ENCODE measurements at regions of chr12 and their contacts with region 1.

Region 1: DNA sequence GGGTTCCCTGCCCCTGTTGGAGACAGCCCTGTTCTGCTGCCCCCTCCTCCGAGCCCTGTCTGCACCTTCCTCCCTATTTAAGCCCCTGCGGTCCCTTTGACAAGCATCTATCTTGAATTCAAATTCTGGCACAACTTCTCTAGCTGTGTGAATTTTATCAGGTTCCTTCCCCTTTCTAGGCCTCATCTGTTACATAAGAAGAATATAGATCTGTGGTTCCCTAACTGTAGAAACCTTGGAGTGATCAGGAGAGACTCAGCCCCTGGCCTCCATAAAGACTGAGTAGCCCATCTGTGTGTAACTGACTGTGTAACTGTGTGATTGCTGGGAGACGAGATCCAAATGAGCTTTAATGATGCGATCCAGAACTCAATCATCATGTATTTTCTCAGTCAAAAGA is 13.0 kb upstream of the RACGAP1 start:
- DNase-seq: no peak
- ATAC-seq: no peak
- H3K4me3 Mint-ChIP-seq: no peak overlapping the region
- H3K27ac Mint-ChIP-seq: no peak overlapping the region
- H3K4me1 Mint-ChIP-seq: peaks cover 4% of the 10 kb centered on the region
- H3K27me3 Mint-ChIP-seq: peaks cover 10% of the 10 kb centered on the region

Region 2: GRCh38 chr12:49983892-49984291 is 54.4 kb before region 1 on chr12:
- CTCF ChIA-PET with region 1: interaction called, 10 read pairs
- POLR2A ChIA-PET with region 1: no interaction called
- DNase-seq: no peak
- ATAC-seq: no peak
- H3K4me3 Mint-ChIP-seq: no peak overlapping the region
- H3K27ac Mint-ChIP-seq: no peak overlapping the region
- H3K4me1 Mint-ChIP-seq: no peaks in the 10 kb centered on the region
- H3K27me3 Mint-ChIP-seq: no peaks in the 10 kb centered on the region

Region 3: DNA sequence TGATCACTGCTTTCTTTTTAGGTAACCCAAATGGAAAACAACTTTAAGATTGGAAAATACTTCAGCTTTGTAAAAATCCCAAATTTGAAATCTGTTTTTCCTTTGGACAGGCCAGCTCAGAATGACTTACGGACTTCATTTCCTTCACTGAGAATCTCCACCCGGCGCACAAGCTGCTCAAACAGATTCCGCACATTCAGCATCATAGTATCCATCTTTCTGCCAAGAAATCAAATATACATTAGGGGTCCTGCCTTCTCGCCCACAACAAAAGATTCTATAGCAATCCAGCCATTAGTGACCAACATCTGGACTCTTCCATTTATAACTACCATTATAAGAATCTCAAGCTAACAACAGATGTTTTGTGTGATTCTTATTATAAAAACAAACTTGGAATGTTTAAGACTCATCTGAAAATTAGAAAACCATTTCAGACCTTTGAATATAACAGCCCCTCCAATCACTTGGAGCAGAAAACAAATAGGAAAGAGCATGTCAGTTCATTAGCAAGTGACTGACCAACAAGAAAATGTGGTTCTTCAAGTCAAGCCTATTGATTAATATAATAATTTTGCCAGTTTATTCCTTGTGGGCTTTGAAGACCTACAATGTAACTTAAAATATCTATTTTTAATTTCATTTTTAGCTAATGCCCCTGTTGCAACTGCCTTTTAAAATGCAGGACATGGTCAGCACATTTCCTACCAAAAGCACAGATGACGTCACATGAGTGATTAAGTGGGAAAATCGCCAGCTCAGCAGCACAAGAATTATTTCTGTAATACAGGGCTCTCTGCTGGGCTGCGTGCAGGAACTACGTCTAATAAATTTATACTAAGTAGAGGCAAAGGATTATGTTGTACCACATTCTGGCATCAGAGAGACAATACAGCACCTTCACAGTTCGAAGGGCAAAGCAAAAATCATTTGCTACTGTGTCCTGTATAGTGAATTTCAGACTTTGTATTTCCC is 21.5 kb before region 1 on chr12:
- CTCF ChIA-PET with region 1: interaction called, 14 read pairs
- POLR2A ChIA-PET with region 1: no interaction called
- DNase-seq: no peak
- ATAC-seq: no peak
- H3K4me3 Mint-ChIP-seq: no peak overlapping the region
- H3K27ac Mint-ChIP-seq: no peak overlapping the region
- H3K4me1 Mint-ChIP-seq: peaks cover 39% of the 10 kb centered on the region
- H3K27me3 Mint-ChIP-seq: no peaks in the 10 kb centered on the region

Region 4: GRCh38 chr12:50050410-50051098 is 12.2 kb after region 1 on chr12:
- CTCF ChIA-PET with region 1: interaction called, 100 read pairs
- POLR2A ChIA-PET with region 1: interaction called, 3 read pairs
- DNase-seq: no peak
- ATAC-seq: no peak
- H3K4me3 Mint-ChIP-seq: no peak overlapping the region
- H3K27ac Mint-ChIP-seq: no peak overlapping the region
- H3K4me1 Mint-ChIP-seq: peaks cover 4% of the 10 kb centered on the region
- H3K27me3 Mint-ChIP-seq: peaks cover 47% of the 10 kb centered on the region

Region 5: DNA sequence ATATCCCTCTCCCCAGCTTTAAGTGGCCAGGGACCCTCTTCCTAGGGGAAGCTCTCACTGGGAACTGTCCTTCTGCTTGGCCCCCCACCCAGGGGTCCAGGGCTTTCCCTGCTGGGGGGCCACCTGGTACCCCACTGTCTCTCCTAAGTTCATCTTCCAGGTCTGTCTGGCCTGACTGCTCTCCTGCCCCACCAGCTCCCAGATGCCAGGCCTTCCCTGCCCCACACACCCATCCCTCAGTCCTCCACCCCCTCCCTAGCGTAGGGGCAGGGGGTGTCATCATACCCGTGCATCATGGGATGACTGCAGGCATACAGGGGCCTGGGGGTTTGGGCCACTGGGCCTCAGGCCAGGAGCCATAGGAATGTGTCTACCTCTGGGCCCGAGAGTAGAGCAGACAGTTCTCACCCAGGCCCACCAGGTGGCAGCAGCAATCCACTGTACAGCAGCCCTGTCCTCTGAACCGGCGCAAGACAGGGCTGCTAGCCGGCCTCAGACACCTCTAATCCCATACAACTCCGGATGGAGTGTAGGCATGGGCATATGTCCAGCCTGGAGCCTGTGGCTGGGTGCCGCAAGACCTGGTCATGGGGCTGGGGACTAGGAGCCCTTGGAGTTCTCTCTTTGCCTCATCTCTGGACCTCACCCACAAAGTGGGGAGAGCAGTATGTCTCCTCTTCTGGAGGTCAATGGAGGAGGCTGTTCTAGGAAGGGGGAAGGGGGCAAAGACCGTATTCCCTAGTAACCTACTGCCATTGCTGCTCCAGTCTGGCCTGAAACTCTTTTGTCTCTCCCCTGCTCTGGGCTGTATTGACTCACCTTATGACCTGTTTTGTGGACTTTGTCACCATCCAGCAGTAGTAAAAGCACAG is 36.8 kb after region 1 on chr12:
- CTCF ChIA-PET with region 1: interaction called, 180 read pairs
- POLR2A ChIA-PET with region 1: no interaction called
- DNase-seq: peak; percentile 87
- ATAC-seq: peak; percentile 95
- H3K4me3 Mint-ChIP-seq: no peak overlapping the region
- H3K27ac Mint-ChIP-seq: peak overlapping the region; percentile 60
- H3K4me1 Mint-ChIP-seq: peaks cover 12% of the 10 kb centered on the region
- H3K27me3 Mint-ChIP-seq: no peaks in the 10 kb centered on the region

Region 6: GRCh38 chr12:50174971-50175715 is 136.8 kb after region 1 on chr12:
- CTCF ChIA-PET with region 1: interaction called, 16 read pairs
- POLR2A ChIA-PET with region 1: interaction called, 3 read pairs
- DNase-seq: peak; percentile 39
- ATAC-seq: no peak
- H3K4me3 Mint-ChIP-seq: no peak overlapping the region
- H3K27ac Mint-ChIP-seq: no peak overlapping the region
- H3K4me1 Mint-ChIP-seq: peaks cover 2% of the 10 kb centered on the region
- H3K27me3 Mint-ChIP-seq: no peaks in the 10 kb centered on the region

Measured in activated CD8-positive, alpha-beta T cell treated with anti-CD3 and anti-CD28 coated beads, Interleukin-2, amount 10 ng/mL, durations not matched to agents 7 days and 5 days (primary cell).